ENCODE measurements at regions of chr2 and their contacts with region 1.

Region 1: DNA sequence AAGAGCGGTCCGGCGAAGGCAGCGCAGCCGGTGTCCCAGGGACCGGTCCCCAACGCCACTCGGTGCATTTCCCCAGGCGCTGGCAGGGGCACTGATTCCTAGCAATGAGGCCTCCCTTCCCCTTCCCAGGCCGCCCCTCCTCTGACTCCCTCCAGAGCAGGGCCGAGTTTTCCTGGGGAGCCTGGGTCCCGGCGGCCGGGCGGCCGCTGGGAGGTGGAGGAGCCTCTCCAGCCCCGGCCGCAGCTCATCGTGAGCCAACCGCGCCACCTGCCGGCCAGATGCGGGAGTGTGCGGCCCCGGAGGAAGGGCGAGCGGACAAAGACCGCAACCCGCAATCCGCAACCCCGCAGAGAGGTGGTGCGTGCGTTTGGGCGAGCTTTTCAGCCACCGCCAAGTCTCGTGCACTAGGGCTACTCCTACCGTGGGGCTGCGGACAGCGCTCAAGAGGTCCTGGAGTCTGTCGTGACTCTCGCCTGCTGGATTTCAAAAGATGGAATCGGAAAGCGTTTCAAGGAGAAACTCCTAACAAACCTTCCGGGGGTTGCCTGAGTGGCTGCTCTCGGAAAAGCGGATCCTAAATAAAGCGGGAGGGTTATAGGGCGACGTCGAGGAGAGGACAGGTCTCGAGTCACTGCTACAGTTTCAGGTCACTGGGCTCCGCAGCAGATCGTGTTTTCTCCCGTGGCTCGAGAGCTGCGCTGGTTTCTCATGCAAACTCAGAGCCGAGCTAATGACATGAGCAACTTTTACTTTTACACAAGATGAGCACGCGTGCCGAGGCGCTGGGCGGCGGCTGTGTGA is 1.5 kb upstream of the EPHA4 start:
- DNase-seq: peak; percentile 67
- ATAC-seq: peak; percentile 71
- H3K4me3 ChIP-seq: peak overlapping the region; percentile 91
- H3K27ac ChIP-seq: peak overlapping the region; percentile 85
- H3K4me1 ChIP-seq: peaks cover 3% of the 10 kb centered on the region
- H3K27me3 ChIP-seq: no peaks in the 10 kb centered on the region
- CTCF ChIP-seq: peak; percentile 95
- POLR2A ChIP-seq: no peak
- RAD21 ChIP-seq: peak; percentile 96

Region 2: DNA sequence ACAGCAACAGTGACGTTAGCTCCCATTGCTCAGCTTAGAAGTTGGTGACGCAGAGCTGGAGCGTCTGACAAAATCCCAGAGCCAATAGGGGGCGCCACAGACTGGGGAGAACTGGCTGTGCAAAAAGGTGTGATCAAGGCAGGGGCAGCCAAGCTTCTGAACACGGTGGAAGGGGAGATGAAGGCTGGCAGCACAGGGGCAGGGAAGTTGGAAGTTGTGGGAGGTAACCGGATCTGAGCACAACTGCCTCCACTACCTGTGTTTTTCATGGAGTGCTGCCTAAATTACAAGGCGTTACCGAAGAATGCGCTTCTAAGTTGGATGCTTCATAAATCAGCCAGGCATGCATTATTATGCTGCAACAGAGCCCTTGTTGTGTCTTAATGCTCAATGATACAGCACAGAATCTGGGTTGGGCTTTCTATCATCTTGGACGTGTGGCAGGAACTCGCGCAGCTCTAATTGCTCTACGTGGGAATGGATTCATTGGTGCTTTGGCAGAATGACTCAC is 1576.2 kb before region 1 on chr2:
- CTCF ChIA-PET with region 1: no interaction called
- POLR2A ChIA-PET with region 1: no interaction called
- dilution Hi-C with region 1: no loop called
- in situ Hi-C with region 1: no loop called
- intact Hi-C with region 1: loop called (anchors 5 kb)
- DNase-seq: peak; percentile 29
- ATAC-seq: no peak
- H3K4me3 ChIP-seq: no peak overlapping the region
- H3K27ac ChIP-seq: no peak overlapping the region
- H3K4me1 ChIP-seq: peaks cover 12% of the 10 kb centered on the region
- H3K27me3 ChIP-seq: no peaks in the 10 kb centered on the region
- CTCF ChIP-seq: peak; percentile 49
- POLR2A ChIP-seq: no peak
- RAD21 ChIP-seq: peak; percentile 65

Region 3: GRCh38 chr2:220373878-220374277 is 1199.8 kb before region 1 on chr2:
- CTCF ChIA-PET with region 1: no interaction called
- POLR2A ChIA-PET with region 1: no interaction called
- dilution Hi-C with region 1: no loop called
- in situ Hi-C with region 1: no loop called
- intact Hi-C with region 1: loop called (anchors 5 kb)
- DNase-seq: peak; percentile 81
- ATAC-seq: peak; percentile 90
- H3K4me3 ChIP-seq: no peak overlapping the region
- H3K27ac ChIP-seq: no peak overlapping the region
- H3K4me1 ChIP-seq: peaks cover 4% of the 10 kb centered on the region
- H3K27me3 ChIP-seq: no peaks in the 10 kb centered on the region
- CTCF ChIP-seq: no peak
- POLR2A ChIP-seq: no peak
- RAD21 ChIP-seq: no peak

Region 4: GRCh38 chr2:220695397-220696279 is 878.0 kb before region 1 on chr2:
- CTCF ChIA-PET with region 1: interaction called, 3 read pairs
- POLR2A ChIA-PET with region 1: no interaction called
- dilution Hi-C with region 1: no loop called
- in situ Hi-C with region 1: loop called (anchors 10 kb)
- intact Hi-C with region 1: no loop called
- DNase-seq: no peak
- ATAC-seq: no peak
- H3K4me3 ChIP-seq: no peak overlapping the region
- H3K27ac ChIP-seq: no peak overlapping the region
- H3K4me1 ChIP-seq: no peaks in the 10 kb centered on the region
- H3K27me3 ChIP-seq: no peaks in the 10 kb centered on the region
- CTCF ChIP-seq: no peak
- POLR2A ChIP-seq: no peak
- RAD21 ChIP-seq: no peak

Region 5: DNA sequence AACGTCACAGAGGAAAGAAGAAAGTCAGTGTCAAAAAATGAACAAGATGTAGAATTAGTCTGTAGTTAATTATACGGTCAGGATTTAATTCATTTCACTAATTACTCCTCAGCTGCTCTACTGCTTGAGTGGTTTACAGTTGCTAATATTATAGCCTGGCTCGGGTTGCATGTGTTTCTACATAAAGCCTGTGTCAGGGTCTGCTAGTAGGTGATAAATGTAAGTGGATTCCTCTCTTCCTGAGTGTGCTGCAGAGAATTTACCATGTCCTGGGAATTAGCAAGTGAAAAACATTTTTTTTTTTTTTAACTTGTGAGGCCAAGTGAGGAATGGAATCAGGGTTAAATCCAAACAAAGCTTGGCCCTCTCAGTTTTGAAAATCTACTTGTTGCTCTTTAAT is 624.2 kb before region 1 on chr2:
- CTCF ChIA-PET with region 1: no interaction called
- POLR2A ChIA-PET with region 1: no interaction called
- dilution Hi-C with region 1: no loop called
- in situ Hi-C with region 1: no loop called
- intact Hi-C with region 1: loop called (anchors 5 kb)
- DNase-seq: peak; percentile 50
- ATAC-seq: peak; percentile 52; the same call in 1 of the 2 replicates
- H3K4me3 ChIP-seq: no peak overlapping the region
- H3K27ac ChIP-seq: no peak overlapping the region
- H3K4me1 ChIP-seq: no peaks in the 10 kb centered on the region
- H3K27me3 ChIP-seq: no peaks in the 10 kb centered on the region; the same call in 1 of the 2 replicates
- CTCF ChIP-seq: no peak
- POLR2A ChIP-seq: no peak
- RAD21 ChIP-seq: no peak

Region 6: DNA sequence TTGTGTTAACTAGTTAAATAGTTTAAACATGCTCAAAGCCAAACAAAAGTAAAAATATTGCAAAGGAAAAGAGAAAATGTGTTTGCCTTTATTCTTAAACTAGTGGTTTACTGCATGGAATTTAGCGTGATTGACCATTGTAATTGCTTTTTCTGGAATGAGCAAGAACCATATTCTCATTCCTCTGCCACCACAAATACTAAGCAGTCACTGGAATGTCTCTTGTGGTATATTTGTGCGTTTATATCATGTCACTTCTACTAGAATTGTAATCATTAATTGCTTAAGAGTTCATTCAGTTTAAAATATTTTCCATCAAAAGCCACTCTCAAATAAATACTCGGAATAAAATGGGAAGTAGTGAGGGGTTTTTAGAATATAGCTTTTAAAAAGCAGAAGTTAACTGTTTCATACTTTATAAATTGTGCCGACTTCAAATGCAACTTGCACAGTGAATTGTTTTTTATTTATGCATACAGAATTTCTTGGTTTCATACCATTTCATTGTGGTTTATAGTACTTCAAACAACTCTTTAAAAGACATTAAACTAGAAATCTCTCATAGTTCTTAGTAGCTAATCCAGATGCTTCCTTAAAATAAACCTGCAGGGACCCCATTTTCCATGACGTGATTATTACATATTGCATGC is 289.6 kb before region 1 on chr2:
- CTCF ChIA-PET with region 1: no interaction called
- POLR2A ChIA-PET with region 1: no interaction called
- dilution Hi-C with region 1: no loop called
- in situ Hi-C with region 1: no loop called
- intact Hi-C with region 1: loop called (anchors 5 kb)
- DNase-seq: peak; percentile 58
- ATAC-seq: peak; percentile 81
- H3K4me3 ChIP-seq: no peak overlapping the region
- H3K27ac ChIP-seq: no peak overlapping the region
- H3K4me1 ChIP-seq: peaks cover 1% of the 10 kb centered on the region; the same call in 1 of the 2 replicates
- H3K27me3 ChIP-seq: peaks cover 2% of the 10 kb centered on the region; the same call in 1 of the 2 replicates
- CTCF ChIP-seq: no peak
- POLR2A ChIP-seq: no peak
- RAD21 ChIP-seq: no peak

Region 7: GRCh38 chr2:221969087-221969829 is 395.6 kb after region 1 on chr2:
- CTCF ChIA-PET with region 1: no interaction called
- POLR2A ChIA-PET with region 1: no interaction called
- dilution Hi-C with region 1: no loop called
- in situ Hi-C with region 1: no loop called
- intact Hi-C with region 1: loop called (anchors 1 kb)
- DNase-seq: peak; percentile 55
- ATAC-seq: peak; percentile 96
- H3K4me3 ChIP-seq: no peak overlapping the region
- H3K27ac ChIP-seq: no peak overlapping the region
- H3K4me1 ChIP-seq: no peaks in the 10 kb centered on the region; the same call in 1 of the 2 replicates
- H3K27me3 ChIP-seq: peaks cover 4% of the 10 kb centered on the region
- CTCF ChIP-seq: peak; percentile 84
- POLR2A ChIP-seq: 0 out of 2 replicates have a peak, but pooled peaks have one; percentile 32
- RAD21 ChIP-seq: peak; percentile 84

Region 8: DNA sequence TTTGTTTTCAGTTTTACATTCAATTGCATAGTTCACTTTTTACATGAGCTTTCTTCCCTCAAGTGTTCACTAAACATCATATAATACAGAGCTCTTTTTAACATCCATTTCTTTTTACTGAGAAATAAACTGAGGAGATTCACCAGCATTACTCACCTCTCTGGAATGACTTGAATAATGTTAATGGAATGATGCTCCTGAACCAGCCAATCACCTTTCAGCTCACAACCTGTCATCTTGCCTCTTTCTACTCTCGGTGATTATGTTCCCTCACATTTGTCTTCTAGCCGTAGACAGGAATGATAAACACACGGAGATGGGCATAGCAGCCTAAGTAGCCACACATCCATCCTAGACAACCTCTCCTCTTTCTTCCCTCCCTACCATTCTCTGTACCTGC is 423.5 kb after region 1 on chr2:
- CTCF ChIA-PET with region 1: no interaction called
- POLR2A ChIA-PET with region 1: no interaction called
- dilution Hi-C with region 1: no loop called
- in situ Hi-C with region 1: no loop called
- intact Hi-C with region 1: no loop called
- DNase-seq: peak; percentile 89
- ATAC-seq: peak; percentile 72
- H3K4me3 ChIP-seq: no peak overlapping the region
- H3K27ac ChIP-seq: no peak overlapping the region
- H3K4me1 ChIP-seq: peaks cover 3% of the 10 kb centered on the region
- H3K27me3 ChIP-seq: no peaks in the 10 kb centered on the region; the same call in 1 of the 2 replicates
- CTCF ChIP-seq: no peak
- POLR2A ChIP-seq: no peak
- RAD21 ChIP-seq: no peak

Measured in IMR-90 (cell line).